ENCODE measurements at regions of chr1 and their contacts with region 1.

Region 1: GRCh38 chr1:9494929-9495758 is 44.1 kb upstream of the SLC25A33 start:
- DNase-seq: peak; percentile 61
- H3K4me3 Mint-ChIP-seq: peak overlapping the region; percentile 66
- H3K27ac Mint-ChIP-seq: no peak overlapping the region
- H3K4me1 Mint-ChIP-seq: peaks cover 4% of the 10 kb centered on the region
- H3K27me3 Mint-ChIP-seq: peaks cover 11% of the 10 kb centered on the region

Region 2: GRCh38 chr1:9037476-9038337 is 457.4 kb before region 1 on chr1:
- intact Hi-C with region 1: no loop called
- DNase-seq: no peak
- H3K4me3 Mint-ChIP-seq: no peak overlapping the region
- H3K27ac Mint-ChIP-seq: no peak overlapping the region
- H3K4me1 Mint-ChIP-seq: no peaks in the 10 kb centered on the region
- H3K27me3 Mint-ChIP-seq: peaks cover 3% of the 10 kb centered on the region

Region 3: DNA sequence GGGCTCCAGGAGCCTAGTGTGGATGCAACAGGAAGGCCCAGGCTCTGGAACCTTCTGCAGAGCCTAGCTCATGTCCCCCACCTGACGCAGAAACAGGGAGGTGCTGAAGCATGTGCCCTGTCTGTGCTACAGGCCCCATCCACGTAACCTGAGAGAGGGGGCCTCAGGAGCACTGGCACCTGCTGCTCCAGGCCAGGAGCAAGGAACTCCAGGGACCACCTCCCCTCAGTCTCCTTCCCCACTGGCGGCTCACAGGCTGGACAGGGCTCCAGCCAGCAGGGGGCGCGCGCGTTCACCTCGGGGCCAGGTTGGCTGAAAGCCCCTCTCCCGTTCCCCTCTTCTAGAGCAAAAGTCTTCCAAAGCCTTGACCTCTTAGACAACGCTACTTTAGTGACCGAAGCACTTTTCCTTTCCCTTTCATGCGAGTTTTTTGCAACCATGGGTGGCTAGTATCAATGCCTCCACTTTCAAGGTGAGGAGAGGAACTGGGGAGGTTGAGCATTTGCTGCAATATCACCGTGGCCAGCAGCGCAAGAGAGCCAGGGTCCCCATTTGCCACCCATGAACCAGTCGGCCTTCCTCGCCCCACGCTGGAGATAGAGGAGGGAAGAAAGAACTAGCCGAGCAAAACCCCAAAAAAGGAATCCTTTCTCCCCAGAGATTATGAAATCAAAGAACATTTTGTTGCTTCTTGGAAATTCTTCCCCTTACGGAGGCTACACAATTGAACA is 313.8 kb before region 1 on chr1:
- intact Hi-C with region 1: loop called (anchors 1 kb)
- DNase-seq: peak; percentile 66
- H3K4me3 Mint-ChIP-seq: peak overlapping the region; percentile 90
- H3K27ac Mint-ChIP-seq: peak overlapping the region; percentile 85
- H3K4me1 Mint-ChIP-seq: peaks cover 22% of the 10 kb centered on the region
- H3K27me3 Mint-ChIP-seq: peaks cover 11% of the 10 kb centered on the region

Region 4: GRCh38 chr1:9267352-9267686 is 227.8 kb before region 1 on chr1:
- intact Hi-C with region 1: loop called (anchors 1 kb)
- DNase-seq: no peak
- H3K4me3 Mint-ChIP-seq: no peak overlapping the region
- H3K27ac Mint-ChIP-seq: no peak overlapping the region
- H3K4me1 Mint-ChIP-seq: peaks cover 5% of the 10 kb centered on the region
- H3K27me3 Mint-ChIP-seq: no peaks in the 10 kb centered on the region

Region 5: GRCh38 chr1:9388335-9389180 is 106.6 kb before region 1 on chr1:
- intact Hi-C with region 1: no loop called
- DNase-seq: no peak
- H3K4me3 Mint-ChIP-seq: no peak overlapping the region
- H3K27ac Mint-ChIP-seq: no peak overlapping the region
- H3K4me1 Mint-ChIP-seq: peaks cover 16% of the 10 kb centered on the region
- H3K27me3 Mint-ChIP-seq: peaks cover 23% of the 10 kb centered on the region

Region 6: DNA sequence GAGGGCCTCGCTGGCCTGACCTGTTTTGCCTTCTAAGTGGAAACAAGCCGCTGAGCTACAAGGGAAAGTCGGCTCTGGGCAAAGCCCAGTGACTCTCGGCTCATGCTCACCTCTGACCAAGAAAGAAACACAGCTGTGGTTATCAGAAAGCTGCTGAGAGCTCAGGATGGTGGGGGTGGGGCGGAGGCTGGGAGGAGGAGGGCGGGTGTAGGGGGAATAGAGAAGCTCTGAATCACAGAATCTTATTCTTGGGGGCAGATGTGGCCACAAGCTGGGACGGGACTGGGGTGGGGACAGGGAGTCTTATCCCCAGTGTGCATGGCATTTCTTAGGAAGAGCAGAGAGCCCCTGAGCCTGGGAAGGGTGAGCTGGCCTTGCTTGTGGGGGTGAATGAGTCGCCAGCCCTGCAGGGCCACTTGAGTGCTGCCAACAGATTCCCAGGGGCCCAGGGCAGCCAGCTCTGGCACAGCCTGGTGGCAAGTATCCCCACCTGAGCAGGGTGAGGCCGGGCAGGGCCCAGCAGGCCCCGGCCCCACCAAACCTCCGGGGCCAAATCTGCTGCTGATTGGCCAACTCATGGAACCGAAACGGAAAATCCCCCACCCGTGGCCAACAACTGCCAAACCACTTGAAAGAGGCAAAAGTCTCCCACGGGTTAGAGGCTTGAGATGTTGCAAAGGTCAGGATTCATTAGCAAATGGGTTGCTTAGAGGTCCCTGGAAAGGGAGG is 81.8 kb before region 1 on chr1:
- intact Hi-C with region 1: no loop called
- DNase-seq: peak; percentile 52
- H3K4me3 Mint-ChIP-seq: peak overlapping the region; percentile 57
- H3K27ac Mint-ChIP-seq: peak overlapping the region; percentile 82
- H3K4me1 Mint-ChIP-seq: peaks cover 50% of the 10 kb centered on the region
- H3K27me3 Mint-ChIP-seq: peaks cover 11% of the 10 kb centered on the region

Region 7: DNA sequence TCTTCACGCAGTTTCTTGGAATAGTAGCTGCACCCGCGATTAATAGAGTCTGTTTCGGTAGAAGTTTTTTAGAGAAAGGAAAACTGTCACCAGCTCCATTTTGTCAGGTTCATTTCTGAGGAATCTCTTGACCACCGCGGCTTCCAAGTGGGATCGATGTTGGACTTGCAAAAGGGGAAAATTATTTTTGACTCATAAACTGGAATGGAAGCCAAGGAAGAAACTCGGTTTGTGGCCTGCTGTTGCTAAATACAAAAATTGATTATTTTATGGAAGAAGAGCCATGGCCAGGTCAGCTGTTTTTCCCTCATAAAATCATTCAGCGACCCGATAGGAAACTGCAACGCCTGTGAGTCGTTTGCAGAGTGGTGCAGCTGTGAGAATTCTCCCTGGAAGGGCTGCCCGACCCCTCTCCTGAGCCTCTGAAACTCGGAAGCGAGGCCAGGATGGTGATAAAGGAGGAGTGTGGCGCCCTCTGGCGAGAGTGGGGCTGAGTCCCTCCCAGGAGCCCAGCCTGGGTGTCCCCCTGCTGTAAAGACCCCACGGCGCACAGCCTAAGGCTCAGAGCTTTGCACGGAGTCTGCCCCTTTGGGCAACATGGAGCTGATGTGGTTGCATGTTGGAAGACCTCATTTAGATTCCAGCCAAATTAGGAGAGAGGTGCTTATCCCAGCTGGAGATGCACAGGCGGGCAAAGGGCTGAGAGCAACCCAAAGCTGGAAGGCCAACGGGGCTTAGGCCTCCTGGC is 39.5 kb before region 1 on chr1:
- intact Hi-C with region 1: loop called (anchors 2 kb)
- DNase-seq: peak; percentile 21
- H3K4me3 Mint-ChIP-seq: no peak overlapping the region
- H3K27ac Mint-ChIP-seq: no peak overlapping the region
- H3K4me1 Mint-ChIP-seq: peaks cover 7% of the 10 kb centered on the region
- H3K27me3 Mint-ChIP-seq: peaks cover 14% of the 10 kb centered on the region

Region 8: GRCh38 chr1:9588551-9589143 is 93.5 kb after region 1 on chr1 and contains the start of gene TMEM201:
- intact Hi-C with region 1: loop called (anchors 5 kb)
- DNase-seq: peak; percentile 94
- H3K4me3 Mint-ChIP-seq: peak within 1 kb of the TSS; percentile 72
- H3K27ac Mint-ChIP-seq: peak within 1 kb of the TSS; percentile 48
- H3K4me1 Mint-ChIP-seq: peaks cover 30% of the 10 kb centered on the region
- H3K27me3 Mint-ChIP-seq: no peaks in the 10 kb centered on the region
- total RNA-seq, gene TMEM201: 36.7 and 38.7 TPM in 2 replicates